B cell (primary cell): ENCODE measurements at regions of chr1 and their contacts with region 1.

Region 1: GRCh38 chr1:214637722-214638458 is 34.9 kb downstream of the CENPF start:
- DNase-seq: peak; percentile 36
- ATAC-seq: no peak
- H3K4me3 ChIP-seq: no peak overlapping the region
- H3K4me3 Mint-ChIP-seq: no peak overlapping the region
- H3K27ac ChIP-seq: no peak overlapping the region
- H3K27ac Mint-ChIP-seq: no peak overlapping the region
- H3K4me1 ChIP-seq: no peaks in the 10 kb centered on the region
- H3K4me1 Mint-ChIP-seq: no peaks in the 10 kb centered on the region
- H3K27me3 ChIP-seq: no peaks in the 10 kb centered on the region
- H3K27me3 Mint-ChIP-seq: no peaks in the 10 kb centered on the region
- CTCF ChIP-seq: peak; percentile 73

Region 2: GRCh38 chr1:214213136-214213535 is 424.8 kb before region 1 on chr1:
- CTCF ChIA-PET with region 1: interaction called, 13 read pairs
- POLR2A ChIA-PET with region 1: no interaction called
- intact Hi-C with region 1: loop called (anchors 2 kb)
- DNase-seq: no peak
- ATAC-seq: no peak
- H3K4me3 ChIP-seq: no peak overlapping the region
- H3K4me3 Mint-ChIP-seq: no peak overlapping the region
- H3K27ac ChIP-seq: no peak overlapping the region
- H3K27ac Mint-ChIP-seq: no peak overlapping the region
- H3K4me1 ChIP-seq: peaks cover 3% of the 10 kb centered on the region in 2 donors
- H3K4me1 Mint-ChIP-seq: peaks cover 2% of the 10 kb centered on the region
- H3K27me3 ChIP-seq: no peaks in the 10 kb centered on the region
- H3K27me3 Mint-ChIP-seq: peaks cover 18% of the 10 kb centered on the region
- CTCF ChIP-seq: no peak

Region 3: GRCh38 chr1:214623430-214623829 is 14.5 kb before region 1 on chr1:
- CTCF ChIA-PET with region 1: interaction called, 88 read pairs
- POLR2A ChIA-PET with region 1: no interaction called
- intact Hi-C with region 1: no loop called
- DNase-seq: no peak
- ATAC-seq: no peak
- H3K4me3 ChIP-seq: no peak overlapping the region
- H3K4me3 Mint-ChIP-seq: no peak overlapping the region
- H3K27ac ChIP-seq: no peak overlapping the region
- H3K27ac Mint-ChIP-seq: no peak overlapping the region
- H3K4me1 ChIP-seq: no peaks in the 10 kb centered on the region
- H3K4me1 Mint-ChIP-seq: no peaks in the 10 kb centered on the region
- H3K27me3 ChIP-seq: no peaks in the 10 kb centered on the region
- H3K27me3 Mint-ChIP-seq: no peaks in the 10 kb centered on the region
- CTCF ChIP-seq: no peak

Region 4: DNA sequence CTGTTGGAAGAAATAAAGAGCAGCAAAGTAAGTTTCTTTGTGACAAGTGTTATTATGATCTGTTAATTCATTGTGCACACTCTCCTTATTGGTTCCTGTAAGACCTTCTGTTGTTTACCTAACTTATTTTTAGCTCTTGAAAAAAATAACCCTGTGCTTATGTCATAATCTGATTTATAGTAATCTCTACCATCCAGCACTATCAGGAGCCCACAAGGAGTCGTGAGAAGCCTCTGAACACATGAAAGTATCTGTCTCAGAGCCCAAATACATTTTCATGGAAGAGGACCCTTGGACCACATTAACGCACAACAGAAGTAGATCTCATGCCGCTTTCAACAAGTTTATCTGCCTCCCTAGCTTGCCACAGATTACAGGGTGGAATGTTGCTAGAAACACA is 10.9 kb after region 1 on chr1:
- CTCF ChIA-PET with region 1: interaction called, 18 read pairs
- POLR2A ChIA-PET with region 1: no interaction called
- intact Hi-C with region 1: no loop called
- DNase-seq: no peak
- ATAC-seq: no peak
- H3K4me3 ChIP-seq: no peak overlapping the region
- H3K4me3 Mint-ChIP-seq: no peak overlapping the region
- H3K27ac ChIP-seq: no peak overlapping the region
- H3K27ac Mint-ChIP-seq: no peak overlapping the region
- H3K4me1 ChIP-seq: no peaks in the 10 kb centered on the region
- H3K4me1 Mint-ChIP-seq: no peaks in the 10 kb centered on the region
- H3K27me3 ChIP-seq: no peaks in the 10 kb centered on the region
- H3K27me3 Mint-ChIP-seq: no peaks in the 10 kb centered on the region
- CTCF ChIP-seq: no peak